Motor neuron (in vitro differentiated cells): ENCODE measurements at regions of chr2 and their contacts with region 1.

Region 1: DNA sequence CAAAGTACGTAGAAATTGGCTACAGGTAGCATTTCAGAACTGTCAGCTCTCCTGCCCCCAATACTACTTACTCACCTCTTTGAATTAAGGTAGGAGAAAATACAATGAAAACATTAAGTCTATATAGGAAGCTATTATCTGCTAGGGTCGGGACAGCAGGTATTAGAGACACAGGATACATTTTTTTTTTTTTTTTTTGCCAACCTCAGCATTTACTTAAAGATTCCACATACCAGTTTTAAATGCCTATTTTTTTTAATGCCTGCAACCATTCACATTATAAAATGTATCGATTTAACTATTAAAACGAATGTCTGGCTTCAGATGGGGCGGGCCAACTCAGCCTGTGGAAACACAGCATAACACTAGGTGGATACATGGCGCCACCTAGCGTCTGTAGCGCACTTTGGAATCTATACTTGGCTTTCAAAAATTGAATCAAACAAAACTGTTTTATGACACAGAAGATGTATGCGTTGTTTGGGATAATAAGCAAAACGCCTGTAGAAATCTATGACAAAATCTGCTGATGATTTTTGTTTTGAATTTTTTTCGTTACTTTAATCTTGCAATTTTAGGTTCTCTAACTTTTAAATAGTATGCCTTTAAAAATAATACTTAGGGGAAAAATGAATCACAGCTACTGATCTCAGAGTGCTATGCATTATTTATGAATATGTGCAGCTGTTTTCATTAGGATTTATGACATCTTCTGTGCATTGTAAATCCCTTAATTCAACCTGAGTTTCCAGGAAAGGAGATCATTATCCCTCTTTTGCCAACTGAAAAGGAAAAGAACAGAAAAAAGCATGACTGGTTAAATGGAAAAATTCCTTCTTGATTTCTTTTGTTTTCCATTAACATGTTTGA is 261.0 kb downstream of the NYAP2 start:
- ATAC-seq: peak; percentile 75 to 89 (median 86)
- H3K4me3 ChIP-seq: no peak overlapping the region
- H3K27ac ChIP-seq: no peak overlapping the region
- H3K4me1 ChIP-seq: peaks cover 0 to 6% of the 10 kb centered on the region in 2 donors

Region 2: GRCh38 chr2:224357098-224357901 is 1303.2 kb before region 1 on chr2:
- in situ Hi-C with region 1: loop called in 2 of 9 experiments (anchors 25 kb)
- ATAC-seq: peak; percentile 43 to 92 (median 70)
- H3K4me3 ChIP-seq: no peak overlapping the region
- H3K27ac ChIP-seq: no peak overlapping the region
- H3K4me1 ChIP-seq: no peaks in the 10 kb centered on the region

Region 3: DNA sequence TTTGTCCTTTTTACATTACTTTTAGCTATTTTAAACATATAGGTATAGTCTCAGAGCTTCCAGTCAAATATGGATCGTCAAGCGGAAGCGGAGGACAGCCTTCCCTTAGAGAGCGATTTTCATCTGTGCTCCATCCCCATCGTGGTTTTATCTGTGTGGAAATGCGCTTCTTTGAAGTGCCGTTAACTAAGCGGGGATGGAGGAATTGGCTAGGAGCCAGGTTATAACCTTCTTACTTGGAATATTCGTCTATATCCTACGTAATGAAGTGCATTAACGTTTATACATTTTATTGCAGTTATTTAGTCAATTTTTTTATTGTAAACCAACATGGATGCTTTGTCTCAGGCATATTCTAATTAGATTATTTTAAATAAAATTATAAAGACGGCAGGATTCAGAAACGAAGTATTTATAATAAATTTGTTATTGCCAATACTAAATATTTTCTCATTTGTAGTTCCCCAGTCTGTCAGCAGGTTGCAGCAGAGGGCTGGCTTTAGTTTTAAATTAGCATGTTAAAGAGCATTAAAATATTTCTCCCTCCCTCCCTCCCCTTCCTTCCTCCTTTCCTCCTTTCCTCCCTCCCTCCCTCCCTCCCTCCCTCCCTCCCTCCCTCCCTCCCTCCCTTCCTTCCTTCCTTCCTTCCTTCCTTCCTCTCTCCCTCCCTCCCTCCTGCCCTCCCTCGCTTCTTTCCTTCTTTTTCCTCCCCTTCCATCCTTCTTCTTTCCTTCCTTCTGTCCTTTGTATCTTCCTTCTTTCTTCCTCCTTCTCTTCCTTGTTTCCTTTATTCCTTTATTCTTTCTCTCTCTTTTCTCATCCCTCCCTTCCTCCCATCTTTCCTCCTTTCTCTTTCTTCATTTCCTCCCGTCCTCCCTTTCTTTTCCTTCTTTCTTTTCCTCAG is 537.7 kb before region 1 on chr2:
- in situ Hi-C with region 1: loop called in 4 of 9 experiments (anchors 25 kb)
- ATAC-seq: no peak
- H3K4me3 ChIP-seq: no peak overlapping the region
- H3K27ac ChIP-seq: no peak overlapping the region
- H3K4me1 ChIP-seq: peaks cover 0 to 20% of the 10 kb centered on the region in 2 donors

Region 4: DNA sequence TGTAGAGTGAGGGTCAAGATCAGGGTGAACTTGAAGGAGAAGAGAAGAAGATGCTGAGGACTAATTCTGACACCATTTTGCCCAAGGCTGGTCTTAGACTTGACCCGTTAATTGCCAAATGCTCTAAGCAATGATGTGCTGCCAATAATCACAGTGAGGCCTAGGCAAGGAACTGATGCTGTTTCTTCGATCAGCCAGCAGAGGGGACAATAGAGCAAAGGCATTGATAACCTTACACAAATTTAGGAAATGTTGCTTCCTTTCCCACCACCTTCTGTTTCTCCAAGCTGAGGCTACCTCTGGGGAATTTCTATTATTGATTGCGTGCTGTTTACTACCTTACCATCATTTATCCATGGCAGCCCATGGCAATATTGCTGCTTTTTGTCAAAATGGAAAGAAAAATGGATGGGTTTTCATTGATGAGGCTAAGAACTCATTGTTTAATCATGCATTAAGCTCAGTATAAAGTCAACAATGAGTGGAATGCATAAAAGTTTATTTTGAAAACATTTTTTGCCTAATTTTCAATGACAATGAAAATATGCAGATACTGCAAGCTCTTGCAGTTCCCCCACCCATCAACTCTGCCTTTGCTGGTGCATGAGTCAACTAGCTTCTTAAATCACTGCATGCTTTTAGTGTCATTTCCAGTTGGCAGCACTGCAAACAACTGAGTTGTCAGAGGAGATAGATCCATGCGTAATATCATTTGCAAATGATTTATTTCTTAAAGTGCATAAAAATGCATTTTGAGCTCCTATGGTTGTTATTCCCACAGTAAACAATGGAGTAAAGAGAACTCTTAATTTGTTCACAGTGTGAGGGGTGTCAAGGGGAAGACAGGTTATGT is 377.4 kb before region 1 on chr2:
- in situ Hi-C with region 1: loop called in 1 of 9 experiments (anchors 10 kb)
- ATAC-seq: peak; percentile 70 to 99 (median 96)
- H3K4me3 ChIP-seq: no peak overlapping the region
- H3K27ac ChIP-seq: no peak overlapping the region
- H3K4me1 ChIP-seq: peaks cover 10 to 14% of the 10 kb centered on the region in 2 donors

Region 5: DNA sequence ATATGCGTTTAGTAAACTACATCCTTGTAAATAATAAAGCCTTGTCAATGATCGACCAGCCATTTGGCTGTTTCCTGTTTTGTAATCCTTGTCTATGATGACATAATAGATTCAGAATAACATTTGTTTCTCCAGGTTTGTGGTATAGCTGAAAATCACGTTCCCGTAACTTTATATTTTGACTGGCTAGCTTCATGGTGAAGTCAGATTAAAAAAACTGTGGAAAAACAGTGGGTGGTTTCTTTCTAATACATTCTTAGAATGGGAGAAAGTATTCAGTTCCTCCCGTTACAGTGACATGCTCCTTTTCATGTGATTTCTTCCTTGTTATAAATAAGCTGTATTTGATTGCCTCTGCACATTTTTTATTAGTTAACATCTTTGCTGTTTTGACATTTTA is 105.9 kb after region 1 on chr2:
- in situ Hi-C with region 1: no loop called
- ATAC-seq: no peak
- H3K4me3 ChIP-seq: no peak overlapping the region
- H3K27ac ChIP-seq: no peak overlapping the region
- H3K4me1 ChIP-seq: peaks cover 3 to 6% of the 10 kb centered on the region in 2 donors

Region 6: DNA sequence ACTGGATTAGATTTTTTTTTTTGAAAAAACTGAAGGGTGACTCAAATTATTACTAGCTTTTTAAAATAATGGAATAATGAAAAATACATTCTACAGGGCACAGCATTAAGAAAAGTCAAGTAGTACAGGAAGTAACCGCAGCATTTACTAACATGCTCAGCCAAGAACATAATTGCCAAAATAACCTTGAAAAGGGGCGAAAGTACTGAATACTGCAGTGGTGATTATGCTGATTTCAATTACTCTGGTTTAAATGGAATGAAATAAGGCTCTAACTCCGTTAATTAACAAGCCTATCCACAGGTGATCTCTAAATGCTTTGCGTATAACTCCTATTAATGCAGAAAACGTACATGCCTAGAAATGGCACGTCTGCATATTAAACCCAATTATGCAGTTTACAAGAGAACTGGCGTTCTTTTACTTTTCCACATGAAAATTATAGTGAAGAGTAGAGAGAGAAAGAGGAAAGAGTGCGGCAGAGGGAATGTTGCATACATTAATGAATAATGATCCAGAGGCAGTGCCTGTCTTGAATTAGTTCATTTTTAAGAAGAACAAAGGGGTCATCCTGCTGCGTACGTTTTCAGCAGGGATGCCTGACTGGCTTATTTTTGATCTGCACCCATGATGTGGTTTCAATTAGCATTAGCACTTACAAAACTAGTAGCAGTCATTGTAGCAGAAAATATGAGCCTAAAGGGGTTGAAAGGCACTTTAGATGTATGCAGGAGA is 351.4 kb after region 1 on chr2:
- in situ Hi-C with region 1: no loop called
- ATAC-seq: no peak
- H3K4me3 ChIP-seq: no peak overlapping the region
- H3K27ac ChIP-seq: no peak overlapping the region
- H3K4me1 ChIP-seq: peaks cover 0 to 3% of the 10 kb centered on the region in 2 donors

Region 7: DNA sequence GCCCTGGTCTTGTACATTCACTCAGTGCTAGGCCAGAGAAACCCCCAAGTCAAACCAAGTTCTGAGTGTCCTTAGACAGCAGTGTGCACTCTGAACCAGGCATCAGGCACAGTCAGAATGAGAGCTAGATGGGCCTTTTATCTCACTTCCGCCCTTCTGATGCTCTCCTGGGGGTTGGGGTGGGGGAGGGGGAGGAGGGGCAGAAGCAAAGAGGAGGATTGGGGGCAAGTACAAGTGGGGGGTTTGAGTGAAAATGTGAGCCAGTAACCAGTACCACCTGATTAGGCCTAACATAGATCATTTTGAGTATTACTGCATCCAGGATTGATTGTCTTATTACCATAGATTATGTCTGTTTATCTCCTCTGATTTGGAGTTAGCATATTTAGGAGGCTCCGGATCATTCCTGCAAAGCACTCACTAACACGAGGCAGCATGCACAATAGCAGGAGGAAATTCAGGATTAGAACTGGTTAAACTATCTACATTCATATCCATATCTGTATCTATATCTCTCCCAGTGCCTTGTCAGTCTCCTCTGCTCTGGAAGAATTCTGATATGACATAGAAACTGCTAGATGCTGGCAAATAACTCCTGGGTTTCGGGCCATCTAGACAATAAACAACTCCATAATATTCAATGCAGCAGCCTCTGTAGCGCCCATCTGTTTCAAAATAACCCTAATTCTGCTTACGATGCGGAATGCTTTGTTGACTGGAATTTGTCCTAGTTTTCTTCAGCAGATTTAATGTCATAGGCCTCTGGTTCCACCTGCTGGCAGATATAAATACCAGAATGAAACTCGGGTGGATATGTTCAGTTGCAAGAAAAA is 1324.5 kb after region 1 on chr2:
- in situ Hi-C with region 1: loop called in 3 of 9 experiments (anchors 25 kb)
- ATAC-seq: peak; percentile 70 to 89 (median 80)
- H3K4me3 ChIP-seq: no peak overlapping the region
- H3K27ac ChIP-seq: peak overlapping the region; percentile 34 to 37
- H3K4me1 ChIP-seq: peaks cover 15 to 20% of the 10 kb centered on the region in 2 donors

Region 8: GRCh38 chr2:227082286-227082685 is 1421.8 kb after region 1 on chr2:
- in situ Hi-C with region 1: loop called in 1 of 9 experiments (anchors 25 kb)
- ATAC-seq: peak in 3 of 8 experiments; percentile 63 to 91 (median 66)
- H3K4me3 ChIP-seq: no peak overlapping the region
- H3K27ac ChIP-seq: no peak overlapping the region
- H3K4me1 ChIP-seq: peaks cover 0 to 8% of the 10 kb centered on the region in 2 donors

Region 9: DNA sequence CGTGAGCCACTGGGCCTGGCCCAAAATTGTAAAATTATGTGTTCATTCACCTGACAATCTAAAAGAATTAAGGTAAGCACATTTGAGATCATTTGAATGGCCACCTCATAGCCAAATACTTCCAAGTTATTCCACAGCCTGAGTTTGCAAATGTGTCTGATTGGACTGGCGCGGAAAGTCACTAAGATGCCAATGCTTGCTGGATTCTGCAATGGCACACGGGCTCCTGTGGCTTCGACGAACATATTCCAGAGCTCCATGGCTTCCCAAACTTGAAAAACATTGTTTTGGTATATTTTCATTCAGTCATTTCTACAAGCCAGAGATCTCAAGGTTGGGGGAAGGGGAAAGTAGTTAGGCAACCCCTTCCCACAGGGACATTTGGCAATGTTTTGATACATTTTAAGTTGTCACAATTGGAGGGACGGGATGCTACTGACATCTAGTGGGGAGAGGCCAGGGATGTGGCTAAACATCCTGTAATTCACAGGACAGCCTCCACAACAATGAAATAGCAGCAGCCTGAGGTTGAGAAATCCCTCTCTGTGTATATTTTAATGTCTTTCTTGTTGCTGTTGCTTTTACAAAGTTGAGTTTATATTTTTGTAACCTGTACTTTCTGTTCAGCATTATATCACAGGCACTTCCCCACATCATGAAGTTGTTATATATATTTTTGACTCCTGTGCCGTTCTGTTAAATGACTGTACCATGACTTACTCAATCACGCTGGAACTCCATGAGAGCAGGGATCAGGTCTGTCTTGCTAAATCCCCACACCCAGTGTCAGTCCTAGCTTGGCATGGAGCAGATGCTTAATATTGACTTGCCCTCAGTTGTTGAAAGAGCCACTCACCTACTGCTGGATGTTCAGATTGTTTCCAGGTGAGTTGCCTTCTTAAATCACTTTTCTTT is 1446.6 kb after region 1 on chr2:
- in situ Hi-C with region 1: loop called in 2 of 9 experiments (anchors 25 kb)
- ATAC-seq: peak; percentile 68 to 96 (median 85)
- H3K4me3 ChIP-seq: no peak overlapping the region
- H3K27ac ChIP-seq: no peak overlapping the region
- H3K4me1 ChIP-seq: no peaks in the 10 kb centered on the region